GM13977 (cell line): ENCODE measurements at regions of chr7 and their contacts with region 1.

Region 1: GRCh38 chr7:130010689-130011412 is 40.3 kb downstream of the ZC3HC1 start:
- DNase-seq: peak; percentile 86
- CTCF ChIP-seq: peak; percentile 83

Region 2: GRCh38 chr7:129367700-129368388 is 643.0 kb before region 1 on chr7:
- in situ Hi-C with region 1: loop called (anchors 25 kb)
- DNase-seq: peak; percentile 73
- CTCF ChIP-seq: peak; percentile 85

Region 3: DNA sequence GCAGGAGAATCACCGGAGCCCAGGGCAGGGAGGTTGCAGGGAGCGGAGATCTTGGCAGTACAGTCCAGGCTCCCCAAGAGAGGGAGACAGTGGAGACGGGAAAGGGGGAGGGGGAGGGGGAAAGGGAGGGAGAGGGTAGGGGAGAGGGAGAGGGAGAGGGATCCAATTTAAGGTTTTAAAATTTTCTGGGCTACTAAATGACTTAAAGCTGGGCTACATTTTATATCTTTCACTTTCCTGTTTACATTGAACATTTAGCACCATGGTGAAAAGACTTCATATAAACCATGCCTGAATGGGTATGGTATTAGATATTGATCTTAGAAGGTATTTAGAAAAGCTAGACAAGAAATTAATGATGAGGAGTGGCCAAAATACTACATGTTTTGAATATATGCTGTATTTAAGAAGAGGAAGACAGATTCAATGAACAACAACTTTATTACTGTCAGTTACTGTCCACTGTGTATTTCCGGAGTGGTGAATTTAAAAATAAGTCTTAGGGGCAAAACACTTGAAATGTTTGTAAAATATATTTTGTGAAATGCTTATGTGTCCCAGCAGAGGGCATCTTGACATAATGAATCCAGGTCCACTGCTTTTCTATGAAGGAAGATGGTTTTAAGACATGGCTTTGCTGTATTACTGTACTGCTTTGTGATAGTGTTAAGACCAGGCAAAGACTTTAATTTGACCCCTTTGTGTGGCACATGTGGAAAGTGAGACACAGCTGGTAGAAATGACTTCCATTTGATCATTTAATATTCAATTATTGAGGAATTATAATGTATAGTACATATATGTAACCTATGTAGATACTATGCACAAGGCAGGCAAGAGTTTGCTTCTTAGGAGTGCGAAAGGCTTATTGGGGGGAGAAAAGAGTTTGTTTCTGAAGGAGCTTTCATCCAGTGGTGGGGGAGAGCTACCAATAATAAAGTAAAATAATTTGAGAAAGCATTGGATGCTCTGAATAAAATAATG is 346.5 kb before region 1 on chr7:
- in situ Hi-C with region 1: loop called (anchors 25 kb)
- DNase-seq: peak; percentile 71
- CTCF ChIP-seq: peak; percentile 48

Region 4: DNA sequence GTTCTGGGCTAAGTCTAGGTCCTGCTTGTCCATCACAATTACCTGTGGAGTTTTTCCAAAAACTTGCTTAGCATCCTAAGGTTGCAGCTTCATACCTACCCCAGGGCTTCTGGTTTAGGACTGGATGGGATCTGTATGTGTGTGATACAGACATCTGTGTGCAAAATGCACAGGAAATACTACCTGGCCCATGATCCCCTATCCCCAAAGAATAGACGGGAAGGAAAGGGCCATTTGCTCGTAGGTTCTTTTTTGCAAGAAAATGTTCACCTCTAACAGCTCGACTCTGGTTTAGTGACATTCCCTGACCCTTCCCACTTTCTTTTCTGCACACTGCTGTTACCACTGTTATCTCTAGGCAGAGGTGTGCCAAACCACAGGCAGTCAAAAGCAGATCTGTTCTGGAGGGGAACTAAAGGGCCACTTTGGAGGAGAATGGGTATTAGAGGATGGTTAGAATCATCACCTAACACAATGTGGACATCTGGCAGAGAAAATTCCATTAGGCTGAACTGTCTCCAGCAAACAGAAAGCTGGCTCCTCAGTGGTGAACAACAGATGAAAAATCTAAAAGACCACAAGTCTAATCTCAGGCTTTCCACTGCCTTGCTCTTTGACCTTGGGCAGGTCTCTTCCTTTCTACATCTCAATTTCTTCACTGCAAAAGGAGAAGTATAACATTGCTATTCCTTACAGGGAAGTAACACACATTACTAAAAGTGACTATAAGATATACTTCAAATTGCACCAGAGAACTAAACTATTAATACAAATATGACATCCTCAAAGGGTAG is 165.5 kb before region 1 on chr7:
- in situ Hi-C with region 1: loop called (anchors 10 kb)
- DNase-seq: no peak
- CTCF ChIP-seq: no peak

Region 5: DNA sequence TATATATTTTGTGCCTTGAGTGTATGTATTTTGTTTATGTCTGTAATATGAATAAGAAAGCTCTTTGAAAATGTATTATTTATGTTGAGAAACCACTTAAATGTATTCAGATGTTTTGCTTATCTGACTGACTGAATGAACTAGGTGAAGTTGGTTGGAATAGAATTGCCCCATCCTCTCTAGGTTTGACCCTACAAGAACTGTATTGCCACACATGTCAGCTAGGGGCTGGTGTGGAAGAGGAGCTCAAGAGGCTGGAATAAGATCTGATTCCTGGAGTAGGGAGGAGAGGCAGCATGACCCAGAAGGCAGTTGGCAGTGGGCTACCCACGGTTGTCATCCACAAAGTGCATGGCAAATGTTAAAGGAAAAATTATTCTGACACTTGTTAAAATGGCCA is 205.9 kb after region 1 on chr7:
- in situ Hi-C with region 1: no loop called
- DNase-seq: no peak
- CTCF ChIP-seq: no peak